Heart left ventricle (tissue), 16 donors: ENCODE measurements at regions of chr17 and their contacts with region 1.

Region 1: DNA sequence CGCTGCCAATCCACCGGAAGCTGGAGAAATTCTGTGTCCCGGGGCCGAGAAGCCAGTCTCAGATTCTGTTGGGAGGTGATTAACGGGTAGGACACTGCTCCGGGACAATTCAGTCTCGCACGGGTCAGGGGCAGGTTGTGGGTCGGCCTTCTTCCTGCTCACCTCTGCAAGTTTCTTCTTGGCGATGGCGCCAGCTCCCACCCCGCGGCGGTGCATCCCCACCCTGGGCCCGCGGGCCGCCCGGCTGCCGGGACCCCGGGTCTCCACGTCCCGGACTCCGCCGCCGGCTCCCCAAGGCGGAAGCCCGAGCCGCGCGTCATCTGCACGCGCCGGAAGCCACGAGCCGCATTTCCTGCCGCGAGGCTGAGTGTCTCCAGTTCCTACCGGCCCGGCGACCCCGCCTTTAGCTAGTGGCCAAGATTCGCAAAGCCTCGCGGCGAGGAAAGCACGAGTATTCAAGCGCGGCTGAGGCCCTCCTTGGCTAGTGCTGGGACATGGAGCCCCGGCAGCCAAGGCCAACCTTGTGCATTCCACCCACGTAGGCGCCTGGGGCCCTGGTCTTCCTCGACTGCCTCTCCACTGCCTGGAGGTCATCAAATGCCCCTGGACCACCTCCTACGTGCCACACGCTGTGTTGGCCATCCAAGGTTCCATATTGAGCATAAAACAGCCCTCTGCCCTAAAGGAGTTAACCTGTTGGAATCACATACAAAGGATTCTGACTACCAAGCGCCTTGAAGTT is at the start of gene SNF8:
- DNase-seq: peak; percentile 89 to 95 (median 92)
- ATAC-seq: peak; percentile 94 to 99 (median 98)
- H3K4me3 ChIP-seq: peak within 1 kb of the TSS; percentile 43 to 99 (median 90)
- H3K27ac ChIP-seq: peak within 1 kb of the TSS; percentile 57 to 95 (median 86)
- H3K4me1 ChIP-seq: peaks cover 3 to 29% (median 16%) of the 10 kb centered on the region in 12 donors
- H3K27me3 ChIP-seq: peaks cover 0 to 6% (median 0%) of the 10 kb centered on the region in 9 donors
- CTCF ChIP-seq: no peak
- POLR2A ChIP-seq: peak in 1 of 2 donors; percentile 84
- total RNA-seq, gene SNF8: 66.9 to 122 (median 96.1) TPM

Region 2: DNA sequence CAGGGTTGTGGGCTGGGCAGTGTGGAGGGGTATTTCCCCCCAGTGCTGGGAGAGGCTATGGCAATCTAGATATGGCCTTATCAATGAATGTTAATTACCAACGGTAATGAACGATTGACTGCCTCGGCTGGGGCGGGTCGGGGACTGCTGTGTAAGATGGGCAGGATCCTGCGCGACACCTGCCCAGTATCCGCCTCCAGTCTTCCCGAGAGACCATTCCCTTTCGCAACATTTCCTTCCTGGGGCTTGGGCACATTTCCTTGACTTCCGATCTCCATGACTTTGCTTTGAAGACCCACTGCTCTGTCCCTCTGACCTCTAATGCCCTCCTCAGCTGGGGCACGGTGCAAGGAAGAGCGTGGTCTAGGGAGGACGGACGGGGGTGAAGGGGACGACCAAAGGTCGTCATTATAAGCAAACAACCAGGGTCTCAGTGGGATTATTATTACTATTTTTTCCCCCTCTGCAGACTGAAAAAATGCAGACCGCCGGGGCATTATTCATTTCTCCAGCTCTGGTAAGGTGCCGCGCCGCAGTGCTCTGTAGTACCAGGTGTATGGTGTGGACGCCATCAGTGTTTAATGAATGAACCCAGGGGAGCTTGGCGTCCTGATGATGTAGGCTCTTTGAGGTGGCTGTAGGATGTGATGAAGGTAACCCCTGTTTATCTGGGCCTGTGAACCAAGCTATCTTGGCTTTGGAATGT is 51.6 kb before region 1 on chr17:
- intact Hi-C with region 1: loop called in 1 of 10 experiments (anchors 5 kb)
- DNase-seq: peak in 1 of 5 donors; percentile 40
- ATAC-seq: peak in 2 of 4 donors; percentile 1 to 6
- H3K4me3 ChIP-seq: peak overlapping the region; percentile 56 to 97 (median 80)
- H3K27ac ChIP-seq: peak overlapping the region; percentile 75 to 95 (median 90)
- H3K4me1 ChIP-seq: peaks cover 0 to 34% (median 15%) of the 10 kb centered on the region in 12 donors
- H3K27me3 ChIP-seq: no peaks in the 10 kb centered on the region
- CTCF ChIP-seq: no peak
- POLR2A ChIP-seq: peak in 1 of 2 donors; percentile 27

Region 3: DNA sequence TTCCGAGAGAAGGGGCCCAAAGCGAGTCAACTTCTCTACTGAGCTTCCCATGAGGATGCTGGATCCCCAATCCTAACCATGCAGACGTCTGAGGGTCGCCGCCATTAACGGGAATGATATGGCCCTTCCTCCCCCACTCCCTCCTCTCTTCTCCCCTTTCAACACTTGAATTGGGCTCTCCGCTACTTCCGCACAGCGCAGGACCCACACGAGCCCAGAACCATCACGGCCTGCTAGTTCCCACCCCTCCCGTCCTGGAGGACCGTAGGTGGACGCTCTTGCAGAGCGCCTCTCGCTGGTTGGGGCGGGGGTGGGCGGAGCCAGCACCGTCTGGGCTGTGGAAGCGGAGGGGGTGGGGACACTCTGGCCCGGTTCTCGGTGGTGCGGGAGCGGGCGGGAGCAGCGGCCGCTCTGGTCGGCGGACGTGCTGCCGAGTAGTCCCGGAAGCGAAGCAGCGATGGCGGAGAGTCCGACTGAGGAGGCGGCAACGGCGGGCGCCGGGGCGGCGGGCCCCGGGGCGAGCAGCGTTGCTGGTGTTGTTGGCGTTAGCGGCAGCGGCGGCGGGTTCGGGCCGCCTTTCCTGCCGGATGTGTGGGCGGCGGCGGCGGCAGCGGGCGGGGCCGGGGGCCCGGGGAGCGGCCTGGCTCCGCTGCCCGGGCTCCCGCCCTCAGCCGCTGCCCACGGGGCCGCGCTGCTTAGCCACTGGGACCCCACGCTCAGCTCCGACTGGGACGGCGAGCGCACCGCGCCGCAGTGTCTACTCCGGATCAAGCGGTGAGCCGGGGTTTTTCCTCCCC is 36.4 kb before region 1 on chr17 and contains the start of gene UBE2Z:
- intact Hi-C with region 1: loop called in 2 of 10 experiments (anchors 2 kb)
- DNase-seq: peak; percentile 95 to 96 (median 95)
- ATAC-seq: peak; percentile 98 to 99 (median 98)
- H3K4me3 ChIP-seq: peak within 1 kb of the TSS; percentile 57 to 99 (median 87)
- H3K27ac ChIP-seq: peak within 1 kb of the TSS; percentile 52 to 98 (median 94)
- H3K4me1 ChIP-seq: peaks cover 0 to 44% (median 27%) of the 10 kb centered on the region in 12 donors
- H3K27me3 ChIP-seq: no peaks in the 10 kb centered on the region
- CTCF ChIP-seq: peak in 5 of 12 donors; percentile 14 to 63 (median 49)
- POLR2A ChIP-seq: peak in 1 of 2 donors; percentile 88
- total RNA-seq, gene UBE2Z: 31.1 to 59.0 (median 41.0) TPM

Region 4: DNA sequence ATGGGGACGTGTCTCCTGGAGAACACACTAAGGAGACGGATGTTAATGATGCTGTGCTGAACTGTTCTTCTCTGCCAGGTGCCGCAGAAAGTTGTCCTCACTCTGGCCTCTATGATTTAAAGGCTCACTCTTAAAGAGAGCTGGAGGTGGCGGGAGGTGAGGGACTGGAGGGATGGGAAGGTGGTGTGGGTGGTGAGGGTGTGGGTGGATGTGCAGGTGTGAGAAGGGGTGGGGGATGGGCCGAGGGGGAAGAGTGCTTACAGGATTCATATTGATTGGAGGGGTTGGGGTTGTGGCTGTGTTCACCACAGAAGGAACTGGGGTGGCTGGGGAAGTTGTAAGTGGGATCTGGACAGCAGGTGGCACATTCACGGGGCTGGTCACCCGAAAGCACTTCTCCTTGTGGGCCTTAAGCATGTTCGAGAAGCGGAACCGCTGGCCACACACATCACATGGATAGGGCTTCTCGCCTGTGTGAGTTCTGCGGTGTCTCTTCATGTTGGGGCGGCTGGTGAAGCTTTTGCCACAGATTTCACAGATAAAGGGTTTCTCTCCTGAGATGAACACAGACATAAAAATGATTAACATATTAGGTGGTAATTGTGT is 353.8 kb after region 1 on chr17:
- intact Hi-C with region 1: no loop called
- DNase-seq: no peak
- ATAC-seq: no peak
- H3K4me3 ChIP-seq: no peak overlapping the region
- H3K27ac ChIP-seq: no peak overlapping the region
- H3K4me1 ChIP-seq: no peaks in the 10 kb centered on the region
- H3K27me3 ChIP-seq: no peaks in the 10 kb centered on the region
- CTCF ChIP-seq: no peak
- POLR2A ChIP-seq: no peak